GM10248 (cell line): ENCODE measurements at regions of chr16 and their contacts with region 1.

Region 1: DNA sequence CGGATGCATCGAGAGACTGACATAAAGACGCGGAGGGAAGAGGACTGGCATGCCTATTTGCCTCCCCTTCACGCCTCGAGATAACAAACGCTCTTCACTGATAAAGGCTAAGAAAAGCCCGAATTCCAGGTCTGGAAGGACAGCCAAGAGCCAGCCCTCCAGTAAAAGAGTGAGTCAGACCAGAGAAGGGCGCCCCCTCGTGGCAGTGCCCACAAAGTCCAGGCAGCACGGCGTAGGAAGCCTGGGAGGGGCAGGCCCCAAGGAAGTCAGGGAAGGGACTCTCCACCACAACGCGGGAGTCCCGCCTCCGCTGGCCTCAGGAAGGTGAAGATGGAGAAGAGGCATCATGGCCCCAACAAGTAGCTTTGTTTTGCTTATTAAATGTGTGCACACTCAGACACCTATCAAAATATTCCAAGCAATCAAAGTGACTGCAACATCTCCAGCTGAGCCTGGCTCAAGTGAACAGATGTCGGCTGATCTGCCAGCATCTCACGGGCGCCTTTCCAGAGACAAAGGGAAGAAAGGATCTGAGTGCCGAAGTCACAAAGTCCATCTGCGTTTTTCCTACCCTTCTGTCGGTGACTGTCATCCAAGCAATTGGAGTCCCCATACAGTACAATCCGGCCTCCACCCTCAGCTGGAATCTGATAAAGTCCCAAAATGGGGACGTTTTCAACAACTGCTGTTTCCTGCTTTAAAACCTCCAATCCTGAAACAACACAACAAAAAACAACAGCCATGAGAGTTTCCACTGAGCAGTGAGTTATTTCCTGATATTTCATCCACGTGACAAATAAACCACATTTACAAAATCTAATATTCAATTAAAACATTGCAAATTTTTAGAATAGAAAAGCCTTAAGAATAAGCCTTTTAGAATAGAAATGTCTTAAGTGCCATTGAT is 20.4 kb upstream of the SLC38A8 start:
- DNase-seq: peak; percentile 65
- CTCF ChIP-seq: peak; percentile 54

Region 2: DNA sequence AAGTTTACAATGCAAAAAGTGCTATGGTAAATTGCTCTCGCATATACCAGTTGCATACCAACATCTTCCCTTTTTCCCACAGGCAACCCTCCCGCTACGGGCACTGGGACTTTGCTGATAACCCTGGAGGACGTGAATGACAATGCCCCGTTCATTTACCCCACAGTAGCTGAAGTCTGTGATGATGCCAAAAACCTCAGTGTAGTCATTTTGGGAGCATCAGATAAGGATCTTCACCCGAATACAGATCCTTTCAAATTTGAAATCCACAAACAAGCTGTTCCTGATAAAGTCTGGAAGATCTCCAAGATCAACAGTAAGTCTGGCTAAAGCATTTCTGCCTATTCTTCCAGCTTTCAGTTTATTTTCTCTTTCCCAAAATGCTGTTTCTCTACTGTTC is 283.1 kb before region 1 on chr16:
- CTCF ChIA-PET with region 1: no interaction called
- POLR2A ChIA-PET with region 1: no interaction called
- DNase-seq: no peak
- CTCF ChIP-seq: no peak

Region 3: DNA sequence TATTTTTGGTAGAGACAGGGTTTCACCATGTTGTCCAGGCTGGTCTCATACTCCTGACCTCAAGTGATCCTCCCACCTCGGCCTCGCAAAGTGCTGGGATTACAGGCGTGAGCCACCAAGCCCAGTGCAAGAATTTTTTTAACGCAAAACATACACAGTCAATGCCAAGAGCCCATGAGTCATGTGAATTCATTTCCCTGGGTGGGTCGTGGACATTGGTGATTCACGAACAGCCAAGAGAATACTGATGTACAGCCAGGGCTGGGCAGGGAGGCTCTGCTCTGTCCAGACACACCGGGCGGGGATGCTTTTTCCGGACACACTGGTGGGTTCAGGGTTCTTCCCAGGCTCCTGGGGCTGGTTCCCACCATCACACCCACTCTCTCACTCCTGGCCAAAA is 38.1 kb before region 1 on chr16:
- CTCF ChIA-PET with region 1: no interaction called
- POLR2A ChIA-PET with region 1: no interaction called
- DNase-seq: no peak
- CTCF ChIP-seq: no peak

Region 4: DNA sequence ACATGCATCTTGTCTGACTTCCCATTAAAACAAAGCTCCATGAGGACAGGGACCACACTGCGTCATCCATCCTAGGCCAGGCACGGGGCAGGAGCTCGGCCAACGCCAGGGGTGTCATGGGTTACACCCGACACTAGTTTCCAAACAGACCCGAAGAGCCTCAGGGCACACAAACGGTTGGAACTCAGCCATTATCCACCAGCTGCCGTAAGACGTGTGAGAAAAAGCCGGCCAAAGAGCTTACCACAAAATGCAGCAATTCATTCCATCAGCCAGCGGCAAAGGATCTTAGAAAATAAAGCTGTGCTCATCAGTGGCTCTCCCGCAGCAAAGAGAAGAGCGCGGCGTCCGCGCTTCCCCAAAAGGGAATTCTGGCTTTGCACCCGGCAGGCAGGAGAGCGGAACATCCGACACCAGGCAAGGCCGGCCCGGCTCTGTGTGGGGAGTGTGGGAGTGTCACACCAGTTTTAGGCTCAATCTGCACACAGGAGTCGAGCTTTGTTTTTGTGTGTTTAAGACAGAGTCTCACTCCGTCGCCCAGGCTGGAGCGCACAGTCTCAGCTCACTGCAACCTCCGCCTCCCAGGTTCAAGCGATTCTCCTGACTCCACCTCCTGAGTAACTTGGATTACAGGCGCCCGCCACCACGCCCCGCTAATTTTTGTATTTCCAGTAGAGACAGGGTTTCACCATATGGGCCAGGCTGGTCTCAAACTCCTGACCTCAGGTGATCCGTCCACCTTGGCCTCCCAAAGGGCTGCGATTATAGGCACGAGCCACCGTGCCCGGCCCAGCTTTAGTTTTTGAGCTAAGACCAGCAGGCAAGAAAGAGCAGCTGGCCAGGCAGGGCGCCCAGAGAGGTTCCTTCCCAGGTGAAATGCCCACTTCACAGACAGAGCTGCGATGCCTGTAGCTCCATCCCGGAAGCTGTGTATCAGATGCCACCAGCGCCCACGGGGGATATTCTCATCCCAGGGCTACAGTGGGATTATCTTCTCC is 21.9 kb before region 1 on chr16:
- CTCF ChIA-PET with region 1: interaction called, 13 read pairs
- POLR2A ChIA-PET with region 1: no interaction called
- DNase-seq: no peak
- CTCF ChIP-seq: no peak